Activated naive CD4-positive, alpha-beta T cell treated with anti-CD3 and anti-CD28 coated beads for 36 hours (primary cell): ENCODE measurements at regions of chr9 and their contacts with region 1.

Region 1: GRCh38 chr9:128275996-128276573 is at the starts of genes GOLGA2 and SWI5:
- DNase-seq: peak; percentile 100
- H3K4me3 Mint-ChIP-seq: peak within 1 kb of the TSS; percentile 94
- H3K27ac Mint-ChIP-seq: peak within 1 kb of the TSS; percentile 86
- H3K4me1 Mint-ChIP-seq: peaks cover 32% of the 10 kb centered on the region
- H3K27me3 Mint-ChIP-seq: no peaks in the 10 kb centered on the region
- total RNA-seq, gene GOLGA2: 33.3 to 34.4 TPM
- total RNA-seq, gene SWI5: 13.3 to 15.5 TPM

Region 2: DNA sequence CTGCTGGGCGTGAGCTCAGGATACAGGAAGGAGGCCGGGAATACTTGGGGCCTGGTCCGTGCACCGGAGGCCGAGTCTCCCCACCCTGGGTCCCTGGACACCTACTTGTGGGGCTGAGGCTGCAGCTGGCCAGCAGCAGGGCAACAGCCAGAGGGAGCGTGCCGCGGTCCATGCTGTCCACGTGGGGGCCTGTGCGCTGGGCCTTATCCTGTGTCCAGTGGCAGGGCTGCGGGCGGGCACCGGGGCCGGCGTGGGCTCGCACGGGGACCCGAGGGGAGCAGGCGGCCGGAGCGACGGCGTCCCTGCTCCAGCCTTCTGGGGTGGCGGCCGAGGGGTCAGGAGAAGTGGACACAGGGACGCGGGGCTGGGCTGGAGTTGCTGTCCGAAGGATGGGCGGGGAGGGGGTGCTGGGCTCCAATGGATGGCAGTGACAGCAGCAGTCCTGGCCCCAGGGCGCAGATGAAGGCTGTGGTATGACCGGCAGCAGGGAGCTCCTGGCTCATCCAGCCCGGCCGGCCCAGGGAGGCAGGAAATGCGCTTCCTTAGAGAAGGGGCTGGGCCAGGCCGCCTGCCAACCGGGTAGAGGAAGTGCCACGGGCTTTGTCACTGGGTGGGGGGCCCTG is 421.8 kb before region 1 on chr9 and contains the start of gene ENG:
- CTCF ChIA-PET with region 1: no interaction called
- intact Hi-C with region 1: no loop called
- DNase-seq: peak; percentile 49
- H3K4me3 Mint-ChIP-seq: peak within 1 kb of the TSS; percentile 86
- H3K27ac Mint-ChIP-seq: peak within 1 kb of the TSS; percentile 81
- H3K4me1 Mint-ChIP-seq: peaks cover 32% of the 10 kb centered on the region
- H3K27me3 Mint-ChIP-seq: no peaks in the 10 kb centered on the region
- total RNA-seq, gene ENG: 10.5 to 11.6 TPM

Region 3: GRCh38 chr9:127970401-127971313 is 305.4 kb before region 1 on chr9:
- CTCF ChIA-PET with region 1: no interaction called
- intact Hi-C with region 1: loop called (anchors 2 kb)
- DNase-seq: peak; percentile 93
- H3K4me3 Mint-ChIP-seq: peak overlapping the region; percentile 72
- H3K27ac Mint-ChIP-seq: peak overlapping the region; percentile 99
- H3K4me1 Mint-ChIP-seq: peaks cover 96% of the 10 kb centered on the region
- H3K27me3 Mint-ChIP-seq: no peaks in the 10 kb centered on the region

Region 4: GRCh38 chr9:128249908-128250838 is 25.9 kb before region 1 on chr9:
- CTCF ChIA-PET with region 1: interaction called, 3 read pairs
- intact Hi-C with region 1: loop called (anchors 1 kb)
- DNase-seq: peak; percentile 98
- H3K4me3 Mint-ChIP-seq: peak overlapping the region; percentile 77
- H3K27ac Mint-ChIP-seq: no peak overlapping the region
- H3K4me1 Mint-ChIP-seq: peaks cover 14% of the 10 kb centered on the region
- H3K27me3 Mint-ChIP-seq: peaks cover 10% of the 10 kb centered on the region

Region 5: DNA sequence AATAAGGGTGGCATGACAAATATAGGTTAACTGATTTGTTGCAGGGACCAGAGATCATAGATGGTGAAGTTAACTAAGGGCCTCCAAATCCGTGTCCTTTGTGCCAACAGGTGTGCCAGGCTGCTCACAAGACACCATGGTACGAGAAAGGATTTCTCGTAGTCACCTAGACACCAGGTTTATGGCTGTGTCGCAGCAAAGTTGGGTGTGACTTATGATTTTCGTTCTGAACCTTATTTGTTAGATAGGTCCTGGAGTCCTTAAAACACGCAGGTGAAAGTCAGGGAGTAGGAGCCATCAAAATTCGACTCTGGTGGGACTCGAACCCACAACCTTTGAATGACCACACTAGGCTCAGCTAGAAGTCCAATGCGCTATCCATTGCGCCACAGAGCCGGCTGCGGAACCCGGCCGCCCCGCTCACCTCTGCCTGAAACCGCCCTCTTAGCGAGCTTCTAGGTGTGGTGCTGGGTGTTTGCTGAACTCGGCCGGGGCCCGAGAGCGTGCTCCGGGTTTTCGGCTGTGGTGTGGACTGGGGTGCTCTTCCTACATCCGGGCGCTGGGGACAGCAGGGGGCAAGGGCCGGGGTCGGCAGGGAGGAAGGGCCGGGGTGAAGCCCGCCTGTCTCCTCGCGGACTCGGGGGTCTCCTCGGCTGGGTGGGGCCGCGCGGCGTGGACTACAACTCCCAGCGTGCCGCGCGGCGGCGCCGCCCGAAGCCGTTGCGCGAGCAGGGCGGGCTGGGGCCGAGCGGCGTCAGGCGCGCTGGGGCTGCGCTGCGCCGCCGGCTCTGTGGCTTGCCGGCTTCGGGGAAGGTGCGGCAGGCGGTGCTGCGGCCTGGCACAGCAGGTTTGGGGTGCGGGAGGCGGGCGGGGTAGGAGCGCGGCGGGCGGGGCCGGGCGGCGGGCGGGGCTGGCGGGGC is 63.9 kb after region 1 on chr9 and contains the start of gene SLC27A4:
- CTCF ChIA-PET with region 1: interaction called, 4 read pairs
- intact Hi-C with region 1: loop called (anchors 1 kb)
- DNase-seq: peak; percentile 78
- H3K4me3 Mint-ChIP-seq: peak within 1 kb of the TSS; percentile 93
- H3K27ac Mint-ChIP-seq: peak within 1 kb of the TSS; percentile 69
- H3K4me1 Mint-ChIP-seq: peaks cover 5% of the 10 kb centered on the region
- H3K27me3 Mint-ChIP-seq: no peaks in the 10 kb centered on the region
- total RNA-seq, gene SLC27A4: 5.7 to 6.8 TPM

Region 6: DNA sequence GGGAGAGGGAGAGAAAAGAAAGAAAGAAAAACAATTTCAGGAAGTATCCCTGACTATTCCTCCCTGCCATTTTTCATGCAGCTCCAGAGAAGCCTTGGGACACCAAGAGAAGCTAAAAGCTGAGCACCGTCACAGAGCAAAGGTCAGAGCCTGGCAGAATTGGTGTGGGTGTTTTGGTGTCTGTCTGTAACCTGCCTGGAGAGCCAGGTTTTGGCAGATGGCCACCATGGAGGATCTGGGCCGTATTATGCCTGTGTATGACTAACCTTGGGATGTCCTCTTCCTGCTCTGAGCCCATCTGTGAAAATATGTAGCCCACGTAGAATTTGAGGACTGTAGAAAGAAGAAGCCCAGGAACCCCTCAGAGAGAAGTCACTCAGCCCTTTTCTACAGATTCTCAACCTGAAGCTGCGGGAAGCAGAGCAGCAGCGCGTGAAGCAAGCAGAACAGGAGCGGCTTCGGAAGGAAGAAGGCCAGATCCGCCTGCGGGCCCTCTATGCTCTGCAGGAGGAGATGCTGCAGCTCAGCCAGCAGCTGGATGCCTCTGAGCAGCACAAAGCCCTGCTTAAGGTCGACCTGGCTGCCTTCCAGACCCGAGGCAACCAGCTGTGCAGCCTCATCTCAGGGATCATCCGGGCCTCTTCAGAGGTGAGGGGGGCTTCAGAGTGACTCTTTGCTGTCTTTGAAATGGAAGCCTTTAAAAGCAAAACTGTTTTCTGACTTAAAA is 247.3 kb after region 1 on chr9:
- CTCF ChIA-PET with region 1: no interaction called
- intact Hi-C with region 1: no loop called
- DNase-seq: no peak
- H3K4me3 Mint-ChIP-seq: no peak overlapping the region
- H3K27ac Mint-ChIP-seq: no peak overlapping the region
- H3K4me1 Mint-ChIP-seq: no peaks in the 10 kb centered on the region
- H3K27me3 Mint-ChIP-seq: no peaks in the 10 kb centered on the region

Region 7: DNA sequence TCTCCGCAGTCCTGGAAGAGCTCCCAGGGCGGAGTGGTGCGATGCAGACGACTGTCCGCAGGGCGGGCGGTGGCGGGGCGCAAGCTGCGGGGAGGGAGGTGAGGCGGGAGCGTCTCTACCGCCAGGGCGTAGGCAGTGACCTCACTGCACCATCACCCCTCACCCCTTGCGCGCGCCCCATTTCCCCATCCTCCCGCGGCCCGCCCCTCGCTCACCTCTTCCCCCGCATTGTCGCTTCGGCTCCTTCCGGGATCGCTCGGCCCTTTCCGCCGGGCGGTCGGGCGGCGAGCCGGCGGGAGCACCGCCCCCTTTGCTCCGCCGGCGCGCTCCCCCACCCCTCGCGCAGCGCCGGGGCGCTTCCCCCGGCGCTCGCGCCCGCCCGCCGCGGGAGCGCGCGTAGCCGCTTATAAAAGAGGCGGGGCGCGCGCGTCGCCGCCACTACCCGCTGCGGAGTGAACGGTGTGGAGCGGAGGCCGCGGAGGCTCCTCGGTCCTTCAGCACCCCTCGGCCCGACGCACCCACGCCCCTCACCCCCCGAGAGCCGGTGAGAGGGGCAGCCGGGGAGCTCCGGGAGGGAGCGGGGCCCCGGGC is 276.2 kb after region 1 on chr9 and contains the start of gene SPTAN1:
- CTCF ChIA-PET with region 1: no interaction called
- intact Hi-C with region 1: loop called (anchors 1 kb)
- DNase-seq: peak; percentile 97
- H3K4me3 Mint-ChIP-seq: peak within 1 kb of the TSS; percentile 85
- H3K27ac Mint-ChIP-seq: peak within 1 kb of the TSS; percentile 84
- H3K4me1 Mint-ChIP-seq: peaks cover 42% of the 10 kb centered on the region
- H3K27me3 Mint-ChIP-seq: no peaks in the 10 kb centered on the region
- total RNA-seq, gene SPTAN1: 162 to 183 TPM